Upper lobe of right lung (tissue), 1 donor: ENCODE measurements at regions of chr22 and their contacts with region 1.

Region 1: DNA sequence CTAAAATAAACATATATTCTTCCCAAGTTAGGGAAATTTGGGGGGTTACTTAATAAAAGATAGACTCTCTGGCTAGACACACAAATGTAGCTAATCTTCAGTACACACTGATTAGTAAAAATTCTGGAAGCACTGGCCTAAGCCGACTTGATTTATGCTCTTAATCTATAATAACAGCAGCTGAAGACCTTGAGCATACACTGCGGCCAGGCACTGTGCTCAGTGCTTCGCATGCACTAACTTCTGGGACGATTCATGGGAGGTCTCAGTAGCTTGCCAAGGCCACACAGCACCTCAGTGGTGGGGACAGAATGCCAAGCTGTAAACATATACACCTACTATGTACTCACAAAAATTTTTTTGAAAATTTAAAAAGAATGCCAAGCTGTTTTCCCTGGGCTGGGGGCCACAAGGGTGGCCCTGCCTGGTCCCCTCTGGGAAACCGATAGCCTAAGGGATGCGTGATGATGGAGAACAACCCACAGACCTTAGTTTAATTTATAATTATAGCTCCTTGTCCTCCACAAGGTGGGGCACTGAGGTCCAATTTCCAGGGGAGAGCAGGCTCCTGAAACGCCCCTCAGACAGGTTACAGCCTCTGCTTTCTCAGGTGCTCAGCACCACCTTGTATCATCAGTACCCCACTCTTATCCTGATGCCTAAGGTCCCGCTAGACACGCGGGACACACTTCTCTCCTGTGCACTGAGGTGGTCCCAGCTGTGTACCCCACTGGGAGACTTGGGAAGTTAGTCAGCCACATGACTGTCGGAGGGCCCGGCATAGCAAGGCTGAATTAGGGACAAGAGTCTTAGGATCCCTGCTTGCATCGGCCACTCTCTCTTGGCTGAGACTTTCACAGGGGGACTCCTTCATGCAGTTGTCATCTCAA is 20.1 kb downstream of the SERPIND1 start:
- DNase-seq: no peak
- ATAC-seq: no peak
- H3K4me3 ChIP-seq: no peak overlapping the region
- H3K27ac ChIP-seq: no peak overlapping the region
- H3K4me1 ChIP-seq: no peaks in the 10 kb centered on the region
- H3K27me3 ChIP-seq: no peaks in the 10 kb centered on the region
- CTCF ChIP-seq: no peak

Region 2: DNA sequence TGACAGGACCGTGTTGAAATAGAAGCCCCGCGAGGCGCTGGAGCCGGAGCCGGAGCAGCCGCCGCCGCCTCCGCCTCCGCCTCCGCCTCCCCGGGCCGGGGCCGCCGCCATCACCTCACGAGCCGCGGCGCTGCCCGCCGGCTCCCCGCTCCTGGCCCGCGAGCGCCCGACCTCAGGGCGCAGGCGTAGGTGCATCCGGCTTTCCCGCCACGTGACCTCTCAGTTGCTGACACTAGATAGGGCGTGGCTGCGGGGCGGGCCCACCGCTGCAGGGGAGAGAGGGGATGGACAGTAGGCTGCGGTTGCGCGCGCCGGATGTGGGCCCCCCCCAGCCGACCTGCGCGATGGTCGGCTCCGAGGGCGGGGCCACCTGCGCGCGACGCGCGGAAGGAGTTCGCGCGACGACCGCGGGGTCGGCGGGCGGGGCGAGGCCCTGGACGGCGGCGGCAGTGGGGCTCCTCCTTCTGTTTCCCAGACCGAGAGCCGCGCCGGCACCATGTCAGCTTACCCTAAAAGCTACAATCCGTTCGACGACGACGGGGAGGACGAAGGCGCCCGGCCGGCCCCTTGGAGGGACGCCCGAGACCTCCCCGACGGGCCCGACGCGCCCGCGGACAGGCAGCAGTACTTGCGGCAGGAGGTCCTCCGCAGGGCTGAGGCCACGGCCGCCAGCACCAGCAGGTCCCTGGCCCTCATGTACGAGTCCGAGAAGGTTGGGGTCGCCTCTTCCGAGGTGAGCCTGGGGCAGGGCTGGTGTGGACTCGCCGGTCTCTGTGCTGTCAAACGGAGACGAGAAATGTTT is 64.8 kb after region 1 on chr22 and contains the starts of genes PI4KA and SNAP29:
- intact Hi-C with region 1: loop called (anchors 10 kb)
- DNase-seq: peak; percentile 100
- ATAC-seq: peak; percentile 98
- H3K4me3 ChIP-seq: peak within 1 kb of the TSS; percentile 96
- H3K27ac ChIP-seq: peak within 1 kb of the TSS; percentile 89
- H3K4me1 ChIP-seq: peaks cover 48% of the 10 kb centered on the region
- H3K27me3 ChIP-seq: no peaks in the 10 kb centered on the region
- CTCF ChIP-seq: no peak
- total RNA-seq, gene PI4KA: 113 TPM
- total RNA-seq, gene SNAP29: 24.3 TPM